ENCODE measurements at regions of chr5 and their contacts with region 1.

Region 1: GRCh38 chr5:138213161-138214029 is at the start of gene CDC23:
- DNase-seq: peak; percentile 93 to 95 (median 94)
- H3K4me3 ChIP-seq: peak within 1 kb of the TSS; percentile 58 to 99 (median 94)
- H3K4me3 Mint-ChIP-seq: peak within 1 kb of the TSS; percentile 98 to 100
- H3K27ac ChIP-seq: peak within 1 kb of the TSS; percentile 58 to 95
- H3K27ac Mint-ChIP-seq: peak within 1 kb of the TSS; percentile 92 to 99 (median 97)
- H3K4me1 ChIP-seq: peaks cover 14 to 19% of the 10 kb centered on the region in 2 donors
- H3K4me1 Mint-ChIP-seq: peaks cover 14% of the 10 kb centered on the region
- H3K27me3 ChIP-seq: no peaks in the 10 kb centered on the region
- H3K27me3 Mint-ChIP-seq: peaks cover 0 to 3% (median 2%) of the 10 kb centered on the region in 3 donors
- CTCF ChIP-seq: no peak
- polyA plus RNA-seq, gene CDC23: 7.8 to 15.9 (median 12.8) TPM

Region 2: GRCh38 chr5:138331449-138332368 is 118.3 kb after region 1 on chr5 and contains the start of gene CDC25C:
- intact Hi-C with region 1: loop called (anchors 5 to 10 kb)
- DNase-seq: peak; percentile 97 to 98 (median 97)
- H3K4me3 ChIP-seq: peak within 1 kb of the TSS; percentile 63 to 90 (median 81)
- H3K4me3 Mint-ChIP-seq: peak within 1 kb of the TSS; percentile 85 to 93
- H3K27ac ChIP-seq: peak within 1 kb of the TSS; percentile 16 to 26
- H3K27ac Mint-ChIP-seq: peak within 1 kb of the TSS; percentile 5 to 85 (median 30)
- H3K4me1 ChIP-seq: peaks cover 18 to 27% of the 10 kb centered on the region in 2 donors
- H3K4me1 Mint-ChIP-seq: peaks cover 18% of the 10 kb centered on the region
- H3K27me3 ChIP-seq: no peaks in the 10 kb centered on the region
- H3K27me3 Mint-ChIP-seq: peaks cover 0 to 2% (median 0%) of the 10 kb centered on the region in 3 donors
- CTCF ChIP-seq: no peak
- polyA plus RNA-seq, gene CDC25C: not detected

Region 3: DNA sequence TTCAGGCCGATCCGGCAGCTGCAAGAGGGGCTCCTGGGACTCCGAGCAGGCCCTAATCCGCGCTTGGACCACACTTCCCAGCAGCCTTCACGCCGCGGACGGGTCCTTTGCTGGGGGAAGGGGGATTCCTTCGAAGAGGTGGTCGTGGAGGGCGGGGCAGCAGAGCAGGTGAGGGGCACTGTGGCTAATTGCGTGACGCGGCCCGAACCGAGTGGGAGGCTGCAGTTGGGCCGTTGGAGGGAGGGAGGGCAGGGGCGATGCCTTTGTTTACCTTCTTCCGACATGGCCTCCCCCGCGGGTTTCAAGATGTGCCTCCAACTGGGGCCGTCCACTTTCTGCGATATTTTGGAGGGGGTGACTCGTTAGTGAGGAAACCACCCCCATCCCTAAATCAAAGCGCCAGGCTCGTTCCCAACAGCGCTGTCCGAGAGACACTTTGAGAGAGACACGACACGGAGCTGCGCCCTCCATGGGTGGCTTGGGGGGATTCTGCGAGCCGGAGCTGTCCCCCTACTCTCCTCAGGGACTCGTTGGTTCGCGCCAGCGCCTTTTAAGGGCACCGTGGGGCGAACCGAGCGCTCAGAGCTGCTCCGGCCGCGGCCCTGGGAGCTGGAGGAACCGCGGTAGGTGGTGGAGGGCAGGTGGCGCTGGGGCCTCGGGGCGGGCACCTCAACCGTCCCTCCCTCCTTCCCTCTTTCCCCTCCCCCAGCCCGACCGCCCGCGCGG is 124.5 kb after region 1 on chr5 and contains the start of gene FAM53C:
- intact Hi-C with region 1: loop called (anchors 5 to 10 kb)
- DNase-seq: peak; percentile 86 to 93 (median 92)
- H3K4me3 ChIP-seq: peak within 1 kb of the TSS; percentile 73 to 90 (median 87)
- H3K4me3 Mint-ChIP-seq: peak within 1 kb of the TSS; percentile 81 to 94
- H3K27ac ChIP-seq: peak within 1 kb of the TSS; percentile 93 to 98
- H3K27ac Mint-ChIP-seq: peak within 1 kb of the TSS; percentile 98 to 100 (median 100)
- H3K4me1 ChIP-seq: peaks cover 26 to 33% of the 10 kb centered on the region in 2 donors
- H3K4me1 Mint-ChIP-seq: peaks cover 36% of the 10 kb centered on the region
- H3K27me3 ChIP-seq: no peaks in the 10 kb centered on the region
- H3K27me3 Mint-ChIP-seq: no peaks in the 10 kb centered on the region
- CTCF ChIP-seq: no peak
- polyA plus RNA-seq, gene FAM53C: 24.9 to 92.2 (median 28.7) TPM

Measured in CD14-positive monocyte (primary cell).